Naive thymus-derived CD4-positive, alpha-beta T cell (primary cell): ENCODE measurements at regions of chr11 and their contacts with region 1.

Region 1: DNA sequence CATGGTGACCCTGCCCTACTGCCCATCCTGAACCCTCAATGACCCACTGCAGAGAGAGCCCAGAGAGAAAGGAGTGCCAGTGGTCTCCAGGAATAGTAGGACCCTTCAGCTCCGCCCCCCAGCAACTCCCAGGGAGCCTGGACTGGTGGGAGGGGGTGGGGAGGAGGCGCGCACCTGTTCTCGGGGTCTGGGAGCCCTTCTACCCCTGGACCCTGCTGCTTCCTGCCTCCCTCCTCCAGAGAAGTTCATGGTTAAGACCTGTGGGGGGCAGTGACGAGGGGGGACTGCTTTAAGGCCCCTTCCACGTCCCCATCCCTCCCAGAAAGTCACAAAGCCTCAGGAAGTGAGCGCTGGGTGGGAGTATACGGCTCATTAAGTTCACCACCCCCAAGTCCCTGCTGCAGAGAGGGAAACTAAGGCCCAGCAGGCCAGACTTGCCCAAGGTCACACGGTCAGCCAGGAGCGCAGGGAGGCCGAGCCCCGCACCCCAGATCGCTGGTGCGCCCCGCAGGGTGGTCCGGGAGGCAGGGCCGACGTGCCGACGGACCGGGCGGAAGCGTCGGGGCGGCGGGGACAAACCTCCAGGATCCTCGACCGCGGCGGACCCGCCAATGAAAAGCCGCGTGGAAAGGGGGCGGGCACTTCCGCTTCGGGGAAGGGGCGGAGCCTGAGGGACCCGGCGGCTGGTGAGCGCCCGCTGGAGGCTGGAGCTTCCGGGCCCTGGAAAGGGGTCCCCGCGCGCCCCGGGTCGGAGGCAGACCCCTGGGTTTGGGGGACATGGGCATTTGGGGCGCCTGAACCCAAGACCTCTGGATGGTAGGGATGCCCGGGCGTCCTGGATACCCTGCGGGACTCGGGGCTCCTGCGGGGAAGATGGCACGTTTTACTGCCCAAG is at the starts of genes NUDT22 and TRPT1:
- DNase-seq: peak; percentile 81 to 97 (median 86)
- ATAC-seq: peak; percentile 82
- H3K4me3 ChIP-seq: peak within 1 kb of the TSS; percentile 60
- H3K4me3 Mint-ChIP-seq: peak within 1 kb of the TSS; percentile 87 to 96 (median 92)
- H3K27ac ChIP-seq: peak within 1 kb of the TSS; percentile 89
- H3K27ac Mint-ChIP-seq: peak within 1 kb of the TSS; percentile 76 to 97 (median 90)
- H3K4me1 ChIP-seq: peaks cover 28 to 34% of the 10 kb centered on the region in 2 donors
- H3K4me1 Mint-ChIP-seq: peaks cover 15 to 46% (median 34%) of the 10 kb centered on the region in 7 donors
- H3K27me3 ChIP-seq: no peaks in the 10 kb centered on the region
- H3K27me3 Mint-ChIP-seq: no peaks in the 10 kb centered on the region
- total RNA-seq, gene NUDT22: 47.8 to 94.0 (median 78.3) TPM
- total RNA-seq, gene TRPT1: 24.0 to 53.0 (median 27.2) TPM

Region 2: DNA sequence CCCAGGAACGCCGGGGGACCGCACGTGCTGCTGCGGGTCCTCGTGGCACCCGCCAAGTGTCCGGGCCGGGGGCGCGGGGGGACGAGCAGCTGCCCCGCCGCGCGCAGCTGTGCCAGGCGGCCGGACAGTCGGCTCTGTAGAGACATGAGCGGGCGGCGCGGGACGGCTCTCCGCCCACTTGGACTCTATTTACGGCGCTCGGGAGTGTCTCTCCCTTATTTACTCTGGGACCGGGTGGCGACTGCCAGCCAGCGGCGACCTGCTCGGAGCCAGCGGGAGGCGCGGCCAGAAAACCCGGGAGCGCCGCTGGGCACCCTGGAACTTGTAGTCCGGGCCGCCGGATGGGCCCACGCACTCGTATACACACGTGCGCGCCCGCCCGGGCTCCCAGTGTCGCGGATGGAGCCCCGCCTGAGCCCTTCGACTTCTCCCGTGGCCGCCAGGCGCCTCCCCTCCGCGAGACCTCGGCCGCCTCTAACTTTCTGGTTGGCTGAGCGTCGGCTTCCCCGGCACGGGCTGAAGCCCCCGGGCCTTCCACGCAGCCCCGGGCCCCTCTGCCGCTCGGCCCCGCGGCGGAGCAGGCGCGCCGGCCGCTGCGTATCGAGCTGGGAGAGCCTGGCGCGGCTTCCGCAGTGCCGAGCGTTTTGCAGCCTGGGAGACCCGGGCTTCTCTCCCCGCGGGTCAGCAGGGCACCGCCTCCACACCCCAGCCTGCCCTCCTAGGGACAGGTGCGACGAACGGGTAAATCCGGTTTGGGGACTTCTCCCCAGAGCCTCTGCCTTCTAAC is 59.8 kb before region 1 on chr11 and contains the start of gene MACROD1:
- CTCF ChIA-PET with region 1: no interaction called
- POLR2A ChIA-PET with region 1: no interaction called
- intact Hi-C with region 1: loop called in 1 of 2 experiments (anchors 2 kb)
- DNase-seq: peak; percentile 52 to 87 (median 65)
- ATAC-seq: peak; percentile 95
- H3K4me3 ChIP-seq: peak within 1 kb of the TSS; percentile 74
- H3K4me3 Mint-ChIP-seq: peak within 1 kb of the TSS; percentile 85 to 94 (median 90)
- H3K27ac ChIP-seq: peak within 1 kb of the TSS; percentile 66
- H3K27ac Mint-ChIP-seq: peak within 1 kb of the TSS; percentile 51 to 83 (median 78)
- H3K4me1 ChIP-seq: peaks cover 0 to 5% of the 10 kb centered on the region in 2 donors
- H3K4me1 Mint-ChIP-seq: peaks cover 7 to 22% (median 16%) of the 10 kb centered on the region in 7 donors
- H3K27me3 ChIP-seq: no peaks in the 10 kb centered on the region
- H3K27me3 Mint-ChIP-seq: no peaks in the 10 kb centered on the region
- total RNA-seq, gene MACROD1: 5.4 to 12.4 (median 8.7) TPM

Region 3: GRCh38 chr11:64185816-64186498 is 39.9 kb before region 1 on chr11 and contains the start of gene STIP1:
- CTCF ChIA-PET with region 1: interaction called, 3 read pairs
- POLR2A ChIA-PET with region 1: interaction called, 6 read pairs
- intact Hi-C with region 1: loop called (anchors 1 to 2 kb)
- DNase-seq: peak; percentile 87 to 100 (median 99)
- ATAC-seq: peak; percentile 92
- H3K4me3 ChIP-seq: peak within 1 kb of the TSS; percentile 84
- H3K4me3 Mint-ChIP-seq: peak within 1 kb of the TSS in 9 of 10 donors; percentile 88 to 99 (median 96)
- H3K27ac ChIP-seq: peak within 1 kb of the TSS; percentile 82
- H3K27ac Mint-ChIP-seq: peak within 1 kb of the TSS in 7 of 9 donors; percentile 89 to 99 (median 92)
- H3K4me1 ChIP-seq: peaks cover 11 to 28% of the 10 kb centered on the region in 2 donors
- H3K4me1 Mint-ChIP-seq: peaks cover 19 to 58% (median 46%) of the 10 kb centered on the region in 7 donors
- H3K27me3 ChIP-seq: no peaks in the 10 kb centered on the region
- H3K27me3 Mint-ChIP-seq: peaks cover 0 to 6% (median 0%) of the 10 kb centered on the region in 5 donors
- total RNA-seq, gene STIP1: 45.1 to 243 (median 88.8) TPM

Region 4: GRCh38 chr11:64240394-64241174 is 14.7 kb after region 1 on chr11 and contains the start of gene FKBP2:
- CTCF ChIA-PET with region 1: interaction called, 3 read pairs
- POLR2A ChIA-PET with region 1: interaction called, 19 read pairs
- intact Hi-C with region 1: loop called (anchors 1 kb)
- DNase-seq: peak; percentile 97 to 99 (median 98)
- ATAC-seq: peak; percentile 78
- H3K4me3 ChIP-seq: peak within 1 kb of the TSS; percentile 73
- H3K4me3 Mint-ChIP-seq: peak within 1 kb of the TSS; percentile 80 to 95 (median 89)
- H3K27ac ChIP-seq: peak within 1 kb of the TSS; percentile 99
- H3K27ac Mint-ChIP-seq: peak within 1 kb of the TSS; percentile 97 to 100 (median 99)
- H3K4me1 ChIP-seq: peaks cover 24 to 28% of the 10 kb centered on the region in 2 donors
- H3K4me1 Mint-ChIP-seq: peaks cover 9 to 46% (median 31%) of the 10 kb centered on the region in 7 donors
- H3K27me3 ChIP-seq: no peaks in the 10 kb centered on the region
- H3K27me3 Mint-ChIP-seq: no peaks in the 10 kb centered on the region
- total RNA-seq, gene FKBP2: 20.3 to 46.6 (median 33.5) TPM

Region 5: DNA sequence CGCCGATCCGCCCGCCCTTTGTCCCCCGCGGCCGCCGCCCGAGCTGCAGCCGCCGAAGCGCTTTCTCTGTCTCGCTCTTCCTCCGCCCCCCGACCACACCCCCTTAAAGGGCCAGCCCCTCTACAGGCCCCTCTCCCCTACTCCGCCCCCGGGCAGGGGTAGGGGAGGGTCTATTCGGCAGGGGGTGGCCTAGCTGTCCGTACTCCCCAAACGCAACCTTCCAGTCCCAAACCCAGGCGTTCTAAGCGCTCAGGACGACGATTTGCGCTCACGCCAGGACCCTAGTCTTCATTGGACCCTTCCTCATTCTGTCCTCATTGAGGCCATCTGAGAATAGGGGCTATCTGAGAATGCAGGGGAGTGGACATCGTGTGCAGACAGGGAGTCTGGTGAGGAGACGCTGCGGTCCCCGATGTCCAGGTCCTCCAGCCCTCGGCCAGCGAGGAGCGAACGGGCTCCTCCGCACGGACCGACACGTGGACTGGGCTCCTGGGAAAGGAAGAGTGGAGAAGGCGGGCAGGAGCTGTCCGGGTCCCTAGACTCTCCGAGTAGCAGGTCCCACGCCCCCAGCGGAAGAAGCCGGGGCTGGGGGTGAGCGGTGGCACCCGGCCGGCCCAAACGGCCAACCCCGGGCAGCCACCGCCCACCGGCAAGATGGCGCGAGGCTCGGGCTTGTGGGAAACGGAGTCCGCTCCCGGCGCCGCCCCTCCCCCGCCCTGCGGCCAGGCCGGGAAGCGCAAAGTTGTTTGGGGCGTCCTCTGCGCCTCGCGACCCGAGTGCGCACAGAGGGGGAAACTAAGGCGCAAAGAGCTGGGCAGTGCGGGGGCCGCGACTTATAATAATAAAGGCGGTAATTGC is 21.2 kb after region 1 on chr11 and contains the start of gene PPP1R14B:
- CTCF ChIA-PET with region 1: no interaction called
- POLR2A ChIA-PET with region 1: interaction called, 17 read pairs
- intact Hi-C with region 1: loop called in 1 of 2 experiments (anchors 1 kb)
- DNase-seq: peak; percentile 55 to 88 (median 70)
- ATAC-seq: peak; percentile 75
- H3K4me3 ChIP-seq: peak within 1 kb of the TSS; percentile 100
- H3K4me3 Mint-ChIP-seq: peak within 1 kb of the TSS; percentile 83 to 93 (median 88)
- H3K27ac ChIP-seq: peak within 1 kb of the TSS; percentile 64
- H3K27ac Mint-ChIP-seq: peak within 1 kb of the TSS; percentile 65 to 88 (median 85)
- H3K4me1 ChIP-seq: peaks cover 25 to 27% of the 10 kb centered on the region in 2 donors
- H3K4me1 Mint-ChIP-seq: peaks cover 7 to 46% (median 32%) of the 10 kb centered on the region in 7 donors
- H3K27me3 ChIP-seq: no peaks in the 10 kb centered on the region
- H3K27me3 Mint-ChIP-seq: peaks cover 0 to 3% (median 0%) of the 10 kb centered on the region in 5 donors
- total RNA-seq, gene PPP1R14B: 20.1 to 116 (median 26.0) TPM

Region 6: GRCh38 chr11:64284048-64284961 is 58.4 kb after region 1 on chr11 and contains the start of gene BAD:
- CTCF ChIA-PET with region 1: no interaction called
- POLR2A ChIA-PET with region 1: interaction called, 7 read pairs
- intact Hi-C with region 1: loop called (anchors 1 kb)
- DNase-seq: peak; percentile 77 to 92 (median 87)
- ATAC-seq: peak; percentile 87
- H3K4me3 ChIP-seq: peak within 1 kb of the TSS; percentile 100
- H3K4me3 Mint-ChIP-seq: peak within 1 kb of the TSS; percentile 84 to 93 (median 89)
- H3K27ac ChIP-seq: peak within 1 kb of the TSS; percentile 99
- H3K27ac Mint-ChIP-seq: peak within 1 kb of the TSS; percentile 81 to 98 (median 95)
- H3K4me1 ChIP-seq: peaks cover 11 to 17% of the 10 kb centered on the region in 2 donors
- H3K4me1 Mint-ChIP-seq: peaks cover 8 to 25% (median 18%) of the 10 kb centered on the region in 7 donors
- H3K27me3 ChIP-seq: no peaks in the 10 kb centered on the region
- H3K27me3 Mint-ChIP-seq: no peaks in the 10 kb centered on the region
- total RNA-seq, gene BAD: 17.5 to 41.1 (median 22.7) TPM

Region 7: GRCh38 chr11:64396079-64396591 is 170.3 kb after region 1 on chr11:
- CTCF ChIA-PET with region 1: no interaction called
- POLR2A ChIA-PET with region 1: no interaction called
- intact Hi-C with region 1: no loop called
- DNase-seq: no peak
- ATAC-seq: no peak
- H3K4me3 ChIP-seq: no peak overlapping the region
- H3K4me3 Mint-ChIP-seq: no peak overlapping the region
- H3K27ac ChIP-seq: no peak overlapping the region
- H3K27ac Mint-ChIP-seq: peak overlapping the region in 1 of 9 donors; percentile 62
- H3K4me1 ChIP-seq: peaks cover 0 to 4% of the 10 kb centered on the region in 2 donors
- H3K4me1 Mint-ChIP-seq: peaks cover 0 to 8% (median 6%) of the 10 kb centered on the region in 7 donors
- H3K27me3 ChIP-seq: no peaks in the 10 kb centered on the region
- H3K27me3 Mint-ChIP-seq: peaks cover 0 to 18% (median 11%) of the 10 kb centered on the region in 5 donors

Region 8: GRCh38 chr11:64778508-64779346 is 552.9 kb after region 1 on chr11 and contains the start of gene SF1:
- CTCF ChIA-PET with region 1: no interaction called
- POLR2A ChIA-PET with region 1: no interaction called
- intact Hi-C with region 1: no loop called
- DNase-seq: peak; percentile 86 to 100 (median 100)
- ATAC-seq: peak; percentile 89
- H3K4me3 ChIP-seq: peak within 1 kb of the TSS; percentile 94
- H3K4me3 Mint-ChIP-seq: peak within 1 kb of the TSS; percentile 90 to 97 (median 94)
- H3K27ac ChIP-seq: peak within 1 kb of the TSS; percentile 99
- H3K27ac Mint-ChIP-seq: peak within 1 kb of the TSS; percentile 98 to 100 (median 99)
- H3K4me1 ChIP-seq: peaks cover 48 to 52% of the 10 kb centered on the region in 2 donors
- H3K4me1 Mint-ChIP-seq: peaks cover 51 to 71% (median 64%) of the 10 kb centered on the region in 7 donors
- H3K27me3 ChIP-seq: no peaks in the 10 kb centered on the region
- H3K27me3 Mint-ChIP-seq: peaks cover 0 to 5% (median 0%) of the 10 kb centered on the region in 5 donors
- total RNA-seq, gene SF1: 462 to 1,612 (median 904) TPM